Psoas muscle (tissue), 8 donors: ENCODE measurements at regions of chr15 and their contacts with region 1.

Region 1: GRCh38 chr15:78767331-78767951 is 43.8 kb downstream of the ADAMTS7 start:
- DNase-seq: peak; percentile 9 to 39
- ATAC-seq: no peak
- H3K4me3 ChIP-seq: no peak overlapping the region
- H3K27ac ChIP-seq: no peak overlapping the region
- H3K4me1 ChIP-seq: no peaks in the 10 kb centered on the region
- H3K27me3 ChIP-seq: no peaks in the 10 kb centered on the region
- CTCF ChIP-seq: no peak

Region 2: GRCh38 chr15:78811124-78811824 is 43.8 kb after region 1 on chr15 and contains the start of gene ADAMTS7:
- intact Hi-C with region 1: loop called (anchors 5 to 10 kb)
- DNase-seq: peak; percentile 83 to 87
- ATAC-seq: peak; percentile 87 to 96 (median 94)
- H3K4me3 ChIP-seq: peak within 1 kb of the TSS; percentile 80
- H3K27ac ChIP-seq: peak within 1 kb of the TSS; percentile 53
- H3K4me1 ChIP-seq: peaks cover 6% of the 10 kb centered on the region
- H3K27me3 ChIP-seq: peaks cover 0 to 20% (median 0%) of the 10 kb centered on the region in 3 donors
- CTCF ChIP-seq: peak; percentile 48
- total RNA-seq, gene ADAMTS7: 0.74 to 1.3 (median 0.96) TPM

Region 3: DNA sequence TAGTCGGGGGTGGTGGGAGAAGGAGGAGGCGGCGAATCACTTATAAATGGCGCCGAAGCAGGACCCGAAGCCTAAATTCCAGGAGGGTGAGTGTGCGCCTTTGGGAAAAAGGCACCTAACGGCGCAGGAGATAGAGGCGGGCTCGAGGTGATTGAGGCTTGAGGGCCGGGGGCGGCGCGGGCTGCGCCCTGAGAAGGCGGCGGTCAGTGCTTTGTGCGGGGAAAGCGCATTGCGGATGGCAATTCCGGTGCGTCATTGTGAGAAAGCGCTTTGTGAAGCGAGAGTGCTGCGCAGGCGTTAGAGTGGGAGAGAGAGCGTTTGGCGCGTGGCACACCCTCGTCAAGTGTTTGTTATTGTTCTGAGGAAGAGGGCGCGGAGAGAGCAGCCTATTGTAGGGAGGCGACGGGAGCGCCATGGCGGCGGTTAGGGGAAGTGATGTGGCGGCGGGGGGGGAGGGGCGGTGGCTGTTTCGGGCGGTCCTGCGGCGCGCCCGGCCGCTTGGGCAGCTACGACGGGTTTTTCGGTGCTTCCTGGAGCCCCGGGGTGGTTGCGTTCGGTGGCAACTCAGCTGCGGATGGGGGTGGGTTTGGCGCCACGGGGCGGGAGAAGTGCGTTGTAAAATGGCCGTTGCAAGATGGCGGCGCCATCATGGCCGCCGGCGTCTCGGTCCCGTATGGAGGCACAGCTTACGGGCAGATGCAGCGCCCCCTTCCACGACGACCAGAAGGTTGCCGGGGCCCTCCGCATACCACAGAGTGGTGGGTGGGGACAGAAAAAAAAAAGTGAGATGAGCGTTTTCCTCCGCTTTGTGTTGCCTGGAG is 105.7 kb after region 1 on chr15:
- intact Hi-C with region 1: loop called in 1 of 2 experiments (anchors 10 kb)
- DNase-seq: peak; percentile 79 to 88
- ATAC-seq: peak; percentile 61 to 78 (median 66)
- H3K4me3 ChIP-seq: peak overlapping the region; percentile 84
- H3K27ac ChIP-seq: peak overlapping the region; percentile 99
- H3K4me1 ChIP-seq: peaks cover 32% of the 10 kb centered on the region
- H3K27me3 ChIP-seq: no peaks in the 10 kb centered on the region
- CTCF ChIP-seq: peak; percentile 3